ENCODE measurements at regions of chr6 and their contacts with region 1.

Region 1: DNA sequence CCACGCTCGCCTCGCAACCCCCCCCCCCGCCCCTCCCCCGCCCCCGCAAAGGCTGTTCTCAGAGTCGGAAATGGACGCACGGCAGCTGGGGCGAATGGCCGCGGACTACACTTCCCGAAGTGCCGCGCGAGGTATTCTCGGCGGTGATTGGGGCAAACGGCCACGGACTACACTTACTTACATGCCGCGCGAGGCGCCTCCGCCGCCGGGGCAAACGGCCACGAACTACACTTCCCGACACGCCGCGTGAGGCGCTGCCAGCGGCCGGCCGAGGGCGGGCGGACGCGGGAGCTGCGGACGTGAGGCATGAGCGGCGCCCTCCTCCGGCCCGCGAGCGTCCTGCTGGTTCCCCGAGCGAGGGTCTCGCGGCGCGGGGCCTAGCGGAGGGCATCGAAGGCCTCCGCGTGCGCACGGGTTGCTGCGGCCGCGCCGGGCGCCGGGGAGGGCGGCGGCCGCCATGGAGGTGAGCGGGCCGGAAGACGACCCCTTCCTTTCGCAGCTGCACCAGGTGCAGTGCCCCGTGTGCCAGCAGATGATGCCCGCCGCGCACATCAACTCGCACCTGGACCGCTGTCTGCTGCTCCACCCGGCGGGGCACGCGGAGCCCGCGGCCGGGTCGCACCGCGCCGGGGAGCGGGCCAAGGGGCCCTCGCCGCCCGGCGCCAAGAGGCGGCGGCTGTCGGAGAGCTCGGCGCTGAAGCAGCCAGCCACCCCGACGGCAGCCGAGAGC is at the start of gene WRNIP1:
- DNase-seq: peak; percentile 95
- H3K4me3 Mint-ChIP-seq: peak within 1 kb of the TSS; percentile 96
- H3K27ac Mint-ChIP-seq: peak within 1 kb of the TSS; percentile 98
- H3K4me1 Mint-ChIP-seq: peaks cover 52% of the 10 kb centered on the region
- H3K27me3 Mint-ChIP-seq: no peaks in the 10 kb centered on the region
- total RNA-seq, gene WRNIP1: 47.5 and 51.3 TPM in 2 replicates

Region 2: GRCh38 chr6:2749969-2750600 is 15.2 kb before region 1 on chr6:
- intact Hi-C with region 1: loop called (anchors 1 kb)
- DNase-seq: peak; percentile 42
- H3K4me3 Mint-ChIP-seq: no peak overlapping the region
- H3K27ac Mint-ChIP-seq: no peak overlapping the region
- H3K4me1 Mint-ChIP-seq: peaks cover 4% of the 10 kb centered on the region
- H3K27me3 Mint-ChIP-seq: peaks cover 46% of the 10 kb centered on the region

Region 3: DNA sequence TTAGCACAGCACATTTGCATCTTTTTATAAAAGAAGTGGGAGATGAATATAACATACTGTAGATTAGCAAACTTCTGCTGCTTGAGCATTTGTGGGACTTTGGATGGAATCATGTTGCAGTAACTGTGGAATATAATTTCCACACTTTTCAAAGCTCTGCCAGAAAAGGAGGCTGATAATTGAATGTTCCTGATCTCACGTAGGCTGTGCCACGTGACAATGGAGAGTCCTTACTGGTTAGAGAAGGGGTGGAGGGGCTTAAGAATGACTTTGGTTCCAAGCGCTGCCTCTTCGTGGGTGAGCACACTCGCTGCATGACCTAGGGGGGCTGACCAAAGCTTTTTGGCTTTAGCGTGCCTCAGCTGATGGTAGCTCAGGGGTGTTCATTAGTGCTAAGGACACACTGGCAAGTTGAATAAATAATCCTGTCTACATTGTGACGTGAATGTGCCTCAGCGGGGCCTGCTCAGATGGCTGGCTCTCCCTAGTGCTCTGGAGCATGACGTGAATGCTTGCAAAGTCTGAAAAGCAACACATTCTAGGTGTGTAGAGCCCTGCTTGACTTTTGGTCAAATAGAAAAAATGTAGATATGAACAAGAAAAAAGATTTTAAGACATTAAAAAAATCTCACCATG is 14.9 kb after region 1 on chr6:
- intact Hi-C with region 1: no loop called
- DNase-seq: no peak
- H3K4me3 Mint-ChIP-seq: no peak overlapping the region
- H3K27ac Mint-ChIP-seq: no peak overlapping the region
- H3K4me1 Mint-ChIP-seq: peaks cover 21% of the 10 kb centered on the region
- H3K27me3 Mint-ChIP-seq: no peaks in the 10 kb centered on the region

Region 4: DNA sequence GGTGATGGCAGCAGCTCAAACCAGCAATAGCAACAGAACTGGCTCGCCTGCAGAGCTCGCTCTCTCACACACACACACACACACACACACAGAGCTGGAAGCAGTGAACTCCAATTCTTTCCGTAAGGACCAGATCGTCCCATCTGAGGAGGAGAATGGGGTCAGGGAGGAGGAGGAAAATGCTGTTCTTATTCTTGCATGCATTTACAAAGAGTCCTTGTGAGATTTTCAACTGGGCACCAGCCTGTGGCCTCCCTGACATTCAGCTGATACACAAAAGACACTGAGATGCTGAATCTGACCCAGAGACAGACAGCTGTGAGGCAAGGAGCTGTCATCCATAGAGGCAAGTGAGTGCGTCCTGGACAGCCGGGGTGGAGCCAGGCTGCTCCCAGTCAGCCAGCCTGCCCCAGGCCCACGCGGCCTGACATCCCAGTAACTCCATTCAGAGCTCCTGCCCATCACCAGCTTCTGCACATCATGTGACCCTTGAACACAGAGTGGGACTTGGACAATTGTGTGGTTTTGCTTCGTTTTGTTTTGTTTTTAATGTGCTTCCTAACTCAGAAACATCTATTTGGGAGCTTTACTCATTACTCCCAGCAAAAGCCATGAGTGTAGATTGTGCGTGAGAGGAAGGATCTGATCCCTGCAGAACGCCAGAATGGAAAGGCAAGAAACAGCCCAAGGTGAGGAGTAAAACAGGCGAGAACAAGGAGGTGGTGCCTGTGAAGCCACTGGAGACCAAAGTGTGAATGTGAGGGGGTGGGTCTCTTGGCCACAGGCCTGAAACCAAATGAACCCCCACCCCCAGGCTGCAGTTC is 135.7 kb after region 1 on chr6:
- intact Hi-C with region 1: loop called (anchors 5 kb)
- DNase-seq: no peak
- H3K4me3 Mint-ChIP-seq: peak overlapping the region; percentile 94
- H3K27ac Mint-ChIP-seq: peak overlapping the region; percentile 93
- H3K4me1 Mint-ChIP-seq: peaks cover 60% of the 10 kb centered on the region
- H3K27me3 Mint-ChIP-seq: peaks cover 2% of the 10 kb centered on the region

Region 5: GRCh38 chr6:3068329-3069214 is 303.2 kb after region 1 on chr6 and contains the start of gene RIPK1:
- intact Hi-C with region 1: loop called (anchors 1 kb)
- DNase-seq: peak; percentile 96
- H3K4me3 Mint-ChIP-seq: peak within 1 kb of the TSS; percentile 93
- H3K27ac Mint-ChIP-seq: peak within 1 kb of the TSS; percentile 96
- H3K4me1 Mint-ChIP-seq: peaks cover 58% of the 10 kb centered on the region
- H3K27me3 Mint-ChIP-seq: no peaks in the 10 kb centered on the region
- total RNA-seq, gene RIPK1: 17.1 and 19.4 TPM in 2 replicates

Region 6: GRCh38 chr6:3258720-3259490 is 493.6 kb after region 1 on chr6 and contains the start of gene PSMG4:
- intact Hi-C with region 1: loop called (anchors 1 kb)
- DNase-seq: peak; percentile 91
- H3K4me3 Mint-ChIP-seq: peak within 1 kb of the TSS; percentile 99
- H3K27ac Mint-ChIP-seq: peak within 1 kb of the TSS; percentile 95
- H3K4me1 Mint-ChIP-seq: peaks cover 39% of the 10 kb centered on the region
- H3K27me3 Mint-ChIP-seq: peaks cover 11% of the 10 kb centered on the region
- total RNA-seq, gene PSMG4: 32.1 and 35.4 TPM in 2 replicates

Region 7: GRCh38 chr6:4135665-4136353 is 1370.5 kb after region 1 on chr6:
- intact Hi-C with region 1: loop called (anchors 5 kb)
- DNase-seq: peak; percentile 88
- H3K4me3 Mint-ChIP-seq: peak overlapping the region; percentile 83
- H3K27ac Mint-ChIP-seq: peak overlapping the region; percentile 80
- H3K4me1 Mint-ChIP-seq: peaks cover 27% of the 10 kb centered on the region
- H3K27me3 Mint-ChIP-seq: peaks cover 4% of the 10 kb centered on the region